Caco-2 (cell line): ENCODE measurements at regions of chr1 and their contacts with region 1.

Region 1: GRCh38 chr1:6026095-6026809 is 19.4 kb upstream of the KCNAB2 start:
- DNase-seq: peak; percentile 89 to 91
- H3K4me3 ChIP-seq: peak overlapping the region; percentile 41
- H3K4me3 Mint-ChIP-seq: peak overlapping the region; percentile 74
- H3K27ac Mint-ChIP-seq: peak overlapping the region; percentile 84
- H3K4me1 ChIP-seq: peaks cover 9% of the 10 kb centered on the region
- H3K4me1 Mint-ChIP-seq: peaks cover 7% of the 10 kb centered on the region
- H3K27me3 ChIP-seq: no peaks in the 10 kb centered on the region
- H3K27me3 Mint-ChIP-seq: peaks cover 3% of the 10 kb centered on the region
- CTCF ChIP-seq: no peak

Region 2: GRCh38 chr1:5798151-5798730 is 228.0 kb before region 1 on chr1:
- CTCF ChIA-PET with region 1: no interaction called
- POLR2A ChIA-PET with region 1: no interaction called
- intact Hi-C with region 1: no loop called
- DNase-seq: no peak
- H3K4me3 ChIP-seq: no peak overlapping the region
- H3K4me3 Mint-ChIP-seq: no peak overlapping the region
- H3K27ac Mint-ChIP-seq: no peak overlapping the region
- H3K4me1 ChIP-seq: no peaks in the 10 kb centered on the region
- H3K4me1 Mint-ChIP-seq: no peaks in the 10 kb centered on the region
- H3K27me3 ChIP-seq: no peaks in the 10 kb centered on the region; the same call in 1 of the 2 replicates
- H3K27me3 Mint-ChIP-seq: no peaks in the 10 kb centered on the region
- CTCF ChIP-seq: no peak

Region 3: GRCh38 chr1:5992026-5992813 is 34.0 kb before region 1 on chr1 and contains the start of gene NPHP4:
- CTCF ChIA-PET with region 1: interaction called, 3 read pairs
- POLR2A ChIA-PET with region 1: interaction called, 3 read pairs
- intact Hi-C with region 1: loop called (anchors 5 kb)
- DNase-seq: peak; percentile 98 to 99
- H3K4me3 ChIP-seq: peak within 1 kb of the TSS; percentile 90
- H3K4me3 Mint-ChIP-seq: peak within 1 kb of the TSS; percentile 73
- H3K27ac Mint-ChIP-seq: peak within 1 kb of the TSS; percentile 66
- H3K4me1 ChIP-seq: peaks cover 5% of the 10 kb centered on the region
- H3K4me1 Mint-ChIP-seq: peaks cover 7% of the 10 kb centered on the region
- H3K27me3 ChIP-seq: no peaks in the 10 kb centered on the region
- H3K27me3 Mint-ChIP-seq: no peaks in the 10 kb centered on the region
- CTCF ChIP-seq: no peak
- total RNA-seq, gene NPHP4: 12.3 TPM in 2 replicates

Region 4: GRCh38 chr1:6003568-6004411 is 22.5 kb before region 1 on chr1:
- CTCF ChIA-PET with region 1: no interaction called
- POLR2A ChIA-PET with region 1: no interaction called
- intact Hi-C with region 1: no loop called
- DNase-seq: no peak
- H3K4me3 ChIP-seq: no peak overlapping the region
- H3K4me3 Mint-ChIP-seq: no peak overlapping the region
- H3K27ac Mint-ChIP-seq: no peak overlapping the region
- H3K4me1 ChIP-seq: peaks cover 3% of the 10 kb centered on the region
- H3K4me1 Mint-ChIP-seq: no peaks in the 10 kb centered on the region
- H3K27me3 ChIP-seq: no peaks in the 10 kb centered on the region
- H3K27me3 Mint-ChIP-seq: no peaks in the 10 kb centered on the region
- CTCF ChIP-seq: no peak

Region 5: DNA sequence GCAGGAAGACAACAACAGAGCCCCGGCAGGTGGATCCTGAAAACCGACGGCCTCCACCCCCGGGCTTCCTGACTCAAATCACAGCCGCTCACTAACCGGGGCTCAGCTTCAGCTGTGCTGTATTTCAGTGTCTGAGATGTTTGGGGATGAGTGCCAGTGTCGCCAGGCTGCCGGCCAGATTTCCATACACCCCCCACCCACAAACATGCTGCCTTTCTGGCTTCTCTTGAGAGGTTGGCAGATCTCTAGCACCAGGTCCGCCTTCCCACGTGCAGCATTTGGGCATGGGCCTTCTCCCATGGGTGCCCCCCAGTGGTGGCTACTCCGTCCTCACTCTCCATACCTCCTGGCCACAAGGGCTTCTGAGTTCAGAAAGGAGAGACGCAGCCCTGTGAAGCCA is 54.2 kb after region 1 on chr1:
- CTCF ChIA-PET with region 1: no interaction called
- POLR2A ChIA-PET with region 1: no interaction called
- intact Hi-C with region 1: no loop called
- DNase-seq: peak in 1 of 2 experiments; percentile 49
- H3K4me3 ChIP-seq: no peak overlapping the region
- H3K4me3 Mint-ChIP-seq: no peak overlapping the region
- H3K27ac Mint-ChIP-seq: no peak overlapping the region
- H3K4me1 ChIP-seq: no peaks in the 10 kb centered on the region
- H3K4me1 Mint-ChIP-seq: no peaks in the 10 kb centered on the region
- H3K27me3 ChIP-seq: no peaks in the 10 kb centered on the region; the same call in 1 of the 2 replicates
- H3K27me3 Mint-ChIP-seq: peaks cover 2% of the 10 kb centered on the region
- CTCF ChIP-seq: peak; percentile 13 to 56